B cell (primary cell): ENCODE measurements at regions of chr2 and their contacts with region 1.

Region 1: DNA sequence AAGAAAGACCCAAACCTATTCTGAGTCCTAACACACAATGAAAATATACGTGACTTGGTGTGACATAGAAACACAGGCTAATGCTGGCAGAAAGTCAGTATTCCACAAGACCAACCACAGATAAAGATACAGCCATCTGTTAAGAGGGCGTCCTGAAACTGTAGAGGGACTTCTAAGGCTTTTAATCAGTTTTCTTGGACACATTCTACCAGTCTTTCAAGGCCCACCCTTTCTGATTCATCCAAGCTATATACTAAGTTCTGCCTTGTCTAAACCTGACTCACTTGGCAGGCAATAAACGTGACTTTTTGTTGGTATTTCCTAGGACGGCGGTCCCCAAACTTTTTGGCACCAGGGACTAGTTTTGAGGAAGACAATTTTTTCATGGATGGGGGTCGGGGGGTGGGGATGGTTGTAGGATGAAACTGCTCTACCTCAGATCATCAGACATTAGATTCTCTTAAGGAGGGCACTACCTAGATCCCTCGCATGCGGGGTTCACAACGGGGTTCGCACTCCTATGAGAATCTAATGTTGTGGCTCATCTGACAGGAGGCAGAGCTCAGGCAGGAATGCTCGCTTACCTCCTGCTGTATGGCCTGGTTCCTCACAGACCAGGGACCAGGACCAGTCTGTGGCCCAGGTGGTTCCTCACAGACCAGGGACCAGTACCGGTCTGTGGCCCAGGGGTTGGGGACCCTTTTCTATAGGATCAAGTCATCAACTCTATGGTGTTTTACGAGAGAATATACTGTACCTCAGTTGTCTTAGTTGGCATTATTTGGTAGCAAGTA is 61.4 kb downstream of the SP3 start:
- DNase-seq: no peak
- ATAC-seq: no peak
- H3K4me3 ChIP-seq: no peak overlapping the region
- H3K4me3 Mint-ChIP-seq: no peak overlapping the region
- H3K27ac ChIP-seq: no peak overlapping the region
- H3K27ac Mint-ChIP-seq: no peak overlapping the region
- H3K4me1 ChIP-seq: peaks cover 4 to 9% of the 10 kb centered on the region in 2 donors
- H3K4me1 Mint-ChIP-seq: peaks cover 11% of the 10 kb centered on the region
- H3K27me3 ChIP-seq: no peaks in the 10 kb centered on the region
- H3K27me3 Mint-ChIP-seq: no peaks in the 10 kb centered on the region
- CTCF ChIP-seq: no peak

Region 2: DNA sequence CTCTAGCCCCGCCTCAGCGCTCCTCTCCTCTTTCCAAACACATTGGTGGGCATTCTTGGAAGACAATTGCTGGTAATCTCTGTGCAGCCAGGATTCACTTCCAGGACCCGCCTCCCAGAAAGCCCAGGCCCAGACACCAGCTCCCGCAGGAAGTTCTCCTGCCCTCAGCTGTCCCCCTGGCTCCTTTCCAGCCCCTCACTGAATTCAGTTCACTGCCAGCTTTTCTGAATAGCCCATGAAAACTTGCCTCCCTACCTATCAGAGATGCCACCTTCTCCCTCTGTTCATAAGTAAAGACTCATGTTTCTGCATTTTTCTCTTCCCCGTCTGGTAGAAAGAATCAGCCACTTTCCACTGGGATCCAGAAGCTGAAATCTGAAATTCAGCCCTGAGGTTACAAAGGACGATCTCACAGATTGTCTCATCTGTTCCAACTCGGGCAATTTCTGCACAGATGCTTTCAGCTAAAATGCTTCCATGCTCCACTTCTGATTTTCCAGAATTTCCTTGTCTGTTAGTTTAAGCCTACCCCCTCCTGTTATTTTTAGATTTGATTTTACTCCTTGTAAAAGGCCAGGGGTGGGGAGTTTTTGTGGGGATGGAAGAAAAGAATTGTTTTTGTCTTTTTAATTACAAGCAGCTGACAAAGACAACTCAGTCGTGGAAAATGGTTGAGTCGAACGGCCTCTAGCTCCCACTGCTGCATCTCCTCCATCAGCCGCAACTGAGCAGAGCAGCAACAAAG is 36.8 kb before region 1 on chr2:
- CTCF ChIA-PET with region 1: no interaction called
- POLR2A ChIA-PET with region 1: no interaction called
- intact Hi-C with region 1: no loop called
- DNase-seq: no peak
- ATAC-seq: no peak
- H3K4me3 ChIP-seq: no peak overlapping the region
- H3K4me3 Mint-ChIP-seq: no peak overlapping the region
- H3K27ac ChIP-seq: no peak overlapping the region
- H3K27ac Mint-ChIP-seq: no peak overlapping the region
- H3K4me1 ChIP-seq: peaks cover 10% of the 10 kb centered on the region in 2 donors
- H3K4me1 Mint-ChIP-seq: peaks cover 12% of the 10 kb centered on the region
- H3K27me3 ChIP-seq: peaks cover 0 to 7% (median 0%) of the 10 kb centered on the region in 4 experiments
- H3K27me3 Mint-ChIP-seq: peaks cover 18% of the 10 kb centered on the region
- CTCF ChIP-seq: no peak

Region 3: GRCh38 chr2:173948842-173949241 is 45.0 kb after region 1 on chr2:
- CTCF ChIA-PET with region 1: no interaction called
- POLR2A ChIA-PET with region 1: no interaction called
- intact Hi-C with region 1: loop called (anchors 5 kb)
- DNase-seq: no peak
- ATAC-seq: no peak
- H3K4me3 ChIP-seq: no peak overlapping the region
- H3K4me3 Mint-ChIP-seq: no peak overlapping the region
- H3K27ac ChIP-seq: no peak overlapping the region
- H3K27ac Mint-ChIP-seq: no peak overlapping the region
- H3K4me1 ChIP-seq: peaks cover 12 to 32% of the 10 kb centered on the region in 2 donors
- H3K4me1 Mint-ChIP-seq: peaks cover 70% of the 10 kb centered on the region
- H3K27me3 ChIP-seq: no peaks in the 10 kb centered on the region
- H3K27me3 Mint-ChIP-seq: no peaks in the 10 kb centered on the region
- CTCF ChIP-seq: no peak